Panc1 (cell line): ENCODE measurements at regions of chrX and their contacts with region 1.

Region 1: DNA sequence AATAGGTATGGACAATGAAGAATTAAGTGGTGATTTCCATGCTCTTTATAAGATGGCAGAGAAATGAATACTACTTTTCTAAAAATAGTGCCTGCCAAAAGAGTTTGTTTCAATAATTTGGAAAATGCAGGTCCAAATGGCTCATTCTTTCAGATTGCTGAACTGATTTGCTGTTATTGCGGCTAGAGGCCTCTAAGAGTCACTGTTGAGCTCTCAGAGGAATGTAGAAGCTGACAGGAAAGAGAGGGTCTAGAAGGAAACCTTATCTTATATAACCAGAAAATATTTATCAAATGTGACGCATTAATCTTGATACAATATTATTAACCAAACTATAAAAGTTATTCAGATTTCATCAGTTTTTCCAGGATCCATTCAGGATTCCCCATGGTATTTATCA is 65.7 kb upstream of the PAGE1 start:
- DNase-seq: no peak
- ATAC-seq: peak; percentile 70
- H3K4me3 ChIP-seq: no peak overlapping the region
- H3K27ac ChIP-seq: no peak overlapping the region
- H3K4me1 ChIP-seq: no peaks in the 10 kb centered on the region
- H3K27me3 ChIP-seq: no peaks in the 10 kb centered on the region; the same call in 1 of the 2 replicates
- CTCF ChIP-seq: peak; percentile 66; the same call in 1 of the 2 replicates

Region 2: GRCh38 chrX:49618574-49618973 is 142.9 kb before region 1 on chrX:
- CTCF ChIA-PET with region 1: no interaction called
- POLR2A ChIA-PET with region 1: no interaction called
- in situ Hi-C with region 1: no loop called
- intact Hi-C with region 1: no loop called
- DNase-seq: no peak
- ATAC-seq: no peak
- H3K4me3 ChIP-seq: no peak overlapping the region
- H3K27ac ChIP-seq: no peak overlapping the region
- H3K4me1 ChIP-seq: no peaks in the 10 kb centered on the region
- H3K27me3 ChIP-seq: no peaks in the 10 kb centered on the region
- CTCF ChIP-seq: no peak

Region 3: GRCh38 chrX:49673394-49673793 is 88.1 kb before region 1 on chrX:
- CTCF ChIA-PET with region 1: no interaction called
- POLR2A ChIA-PET with region 1: interaction called, 11 read pairs
- in situ Hi-C with region 1: no loop called
- intact Hi-C with region 1: no loop called
- DNase-seq: no peak
- ATAC-seq: no peak
- H3K4me3 ChIP-seq: no peak overlapping the region
- H3K27ac ChIP-seq: no peak overlapping the region
- H3K4me1 ChIP-seq: no peaks in the 10 kb centered on the region
- H3K27me3 ChIP-seq: no peaks in the 10 kb centered on the region
- CTCF ChIP-seq: no peak

Region 4: GRCh38 chrX:49838374-49838773 is 76.9 kb after region 1 on chrX:
- CTCF ChIA-PET with region 1: interaction called, 4 read pairs
- POLR2A ChIA-PET with region 1: no interaction called
- in situ Hi-C with region 1: no loop called
- intact Hi-C with region 1: loop called (anchors 2 kb)
- DNase-seq: peak; percentile 12
- ATAC-seq: peak; percentile 91
- H3K4me3 ChIP-seq: no peak overlapping the region
- H3K27ac ChIP-seq: no peak overlapping the region
- H3K4me1 ChIP-seq: no peaks in the 10 kb centered on the region
- H3K27me3 ChIP-seq: peaks cover 3% of the 10 kb centered on the region; the same call in 1 of the 2 replicates
- CTCF ChIP-seq: peak; percentile 85